Activated CD8-positive, alpha-beta T cell treated with anti-CD3 and anti-CD28 coated beads for 36 hours (primary cell): ENCODE measurements at regions of chr4 and their contacts with region 1.

Region 1: DNA sequence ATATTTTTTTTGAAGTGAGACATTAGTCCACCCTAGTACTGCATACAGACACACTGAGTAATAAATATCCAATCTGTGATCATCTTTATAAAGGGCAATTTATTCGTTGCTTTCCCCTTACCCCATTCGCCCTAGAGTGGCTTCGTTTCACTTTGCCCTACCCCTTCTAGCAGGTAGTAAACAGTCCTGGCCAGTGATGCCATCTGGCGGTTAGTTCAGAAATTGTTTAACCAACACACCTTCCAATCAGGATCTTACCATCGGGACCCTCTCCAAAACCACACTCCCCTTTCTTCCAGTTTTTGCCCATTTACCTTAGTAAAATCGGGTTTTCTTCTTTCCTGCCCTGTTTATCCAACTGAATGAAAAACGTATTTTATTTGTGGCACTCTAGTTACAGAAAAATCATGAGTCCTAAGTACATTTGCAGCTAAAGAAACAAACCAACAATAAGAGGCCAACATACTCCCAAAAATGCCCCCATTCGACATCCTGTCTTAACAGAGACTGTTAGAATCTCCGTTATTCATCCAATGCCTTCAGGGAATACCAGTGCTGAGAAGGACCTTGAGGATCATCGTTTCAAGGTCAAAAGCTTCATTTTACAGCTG is 2.2 kb downstream of the PPA2 start:
- DNase-seq: peak; percentile 82
- ATAC-seq: peak; percentile 32
- H3K4me3 Mint-ChIP-seq: peak overlapping the region; percentile 99
- H3K27ac Mint-ChIP-seq: peak overlapping the region; percentile 70
- H3K4me1 Mint-ChIP-seq: peaks cover 49% of the 10 kb centered on the region
- H3K27me3 Mint-ChIP-seq: peaks cover 1% of the 10 kb centered on the region
- CTCF ChIP-seq: peak; percentile 75

Region 2: GRCh38 chr4:104966349-104967033 is 505.2 kb before region 1 on chr4:
- CTCF ChIA-PET with region 1: interaction called, 12 read pairs
- POLR2A ChIA-PET with region 1: no interaction called
- intact Hi-C with region 1: no loop called
- DNase-seq: peak; percentile 72
- ATAC-seq: peak; percentile 98
- H3K4me3 Mint-ChIP-seq: peak overlapping the region; percentile 49
- H3K27ac Mint-ChIP-seq: peak overlapping the region; percentile 90
- H3K4me1 Mint-ChIP-seq: peaks cover 22% of the 10 kb centered on the region
- H3K27me3 Mint-ChIP-seq: no peaks in the 10 kb centered on the region
- CTCF ChIP-seq: no peak

Region 3: DNA sequence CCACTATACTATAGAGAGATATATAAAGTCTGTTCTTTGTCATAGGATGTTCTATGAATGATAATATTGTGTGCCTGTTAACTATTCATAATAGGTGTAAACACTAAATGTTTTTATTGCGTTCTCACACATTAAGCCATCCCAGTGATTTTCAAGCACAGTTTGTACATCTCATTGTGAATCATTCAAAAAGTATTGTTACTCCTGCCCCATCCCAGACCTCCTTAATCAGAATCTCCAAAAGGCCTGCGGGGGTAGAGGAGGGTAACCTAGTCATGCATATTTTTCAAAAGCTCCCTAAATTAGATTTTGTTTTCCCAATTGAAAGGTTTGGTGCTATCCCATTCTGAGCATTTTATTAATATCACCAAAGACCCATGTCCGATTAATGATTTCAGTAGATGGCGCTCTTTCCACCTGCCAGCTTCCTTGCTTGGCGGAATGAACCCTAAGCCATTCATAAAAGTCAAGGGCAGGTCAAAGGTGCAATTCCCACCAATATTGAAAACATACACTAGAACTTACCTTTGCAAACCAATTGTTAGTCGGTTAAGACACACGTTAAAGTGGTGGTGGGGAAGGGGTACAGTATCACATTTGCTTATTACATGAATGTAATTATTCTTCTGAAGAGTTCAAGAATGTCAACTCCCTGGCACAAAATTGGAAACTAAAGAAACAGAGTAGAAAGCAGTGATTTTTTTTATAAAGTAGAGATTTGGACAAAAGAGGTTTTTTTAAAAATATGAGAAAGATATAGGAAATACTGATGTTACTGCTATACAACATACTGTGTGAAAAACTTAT is 330.8 kb before region 1 on chr4:
- CTCF ChIA-PET with region 1: interaction called, 16 read pairs
- POLR2A ChIA-PET with region 1: interaction called, 9 read pairs
- intact Hi-C with region 1: loop called (anchors 1 kb)
- DNase-seq: peak; percentile 55
- ATAC-seq: no peak
- H3K4me3 Mint-ChIP-seq: no peak overlapping the region
- H3K27ac Mint-ChIP-seq: no peak overlapping the region
- H3K4me1 Mint-ChIP-seq: peaks cover 26% of the 10 kb centered on the region
- H3K27me3 Mint-ChIP-seq: peaks cover 5% of the 10 kb centered on the region
- CTCF ChIP-seq: peak; percentile 79

Region 4: GRCh38 chr4:105191621-105192210 is 280.0 kb before region 1 on chr4:
- CTCF ChIA-PET with region 1: interaction called, 10 read pairs
- POLR2A ChIA-PET with region 1: interaction called, 4 read pairs
- intact Hi-C with region 1: no loop called
- DNase-seq: no peak
- ATAC-seq: peak; percentile 71
- H3K4me3 Mint-ChIP-seq: peak overlapping the region; percentile 4
- H3K27ac Mint-ChIP-seq: peak overlapping the region; percentile 87
- H3K4me1 Mint-ChIP-seq: peaks cover 87% of the 10 kb centered on the region
- H3K27me3 Mint-ChIP-seq: no peaks in the 10 kb centered on the region
- CTCF ChIP-seq: no peak

Region 5: DNA sequence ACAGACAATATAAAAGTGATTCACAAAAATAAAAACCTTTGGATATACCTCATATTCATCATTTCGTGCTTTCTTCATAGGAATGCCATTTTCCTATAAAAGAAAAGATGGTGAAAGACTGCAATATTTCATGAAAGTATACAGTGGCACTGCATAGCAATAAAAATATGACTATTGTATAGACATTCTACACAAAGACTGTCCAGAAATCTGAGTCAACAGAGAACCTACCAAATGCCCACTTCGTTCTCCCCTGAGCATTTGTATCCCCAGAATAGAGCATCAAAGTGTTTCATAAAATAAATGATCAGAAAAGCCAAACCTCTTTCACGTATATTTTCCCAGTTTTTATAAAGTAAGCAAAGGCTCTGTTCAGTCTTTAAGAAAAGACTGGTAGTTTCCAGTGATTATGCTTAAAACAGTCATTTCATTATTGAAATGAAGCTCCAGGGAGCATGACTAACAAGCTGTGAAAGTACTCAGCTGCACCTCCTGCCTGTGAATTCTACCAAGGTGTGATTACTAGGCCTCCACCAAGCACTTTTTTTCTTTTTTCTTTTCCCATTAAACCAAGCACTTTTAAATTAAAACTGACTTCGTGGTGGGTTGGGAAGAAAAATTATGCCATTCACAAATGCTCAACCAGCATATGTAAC is 18.0 kb before region 1 on chr4:
- CTCF ChIA-PET with region 1: interaction called, 25 read pairs
- POLR2A ChIA-PET with region 1: interaction called, 7 read pairs
- intact Hi-C with region 1: no loop called
- DNase-seq: peak; percentile 63
- ATAC-seq: peak; percentile 96
- H3K4me3 Mint-ChIP-seq: no peak overlapping the region
- H3K27ac Mint-ChIP-seq: peak overlapping the region; percentile 54
- H3K4me1 Mint-ChIP-seq: peaks cover 34% of the 10 kb centered on the region
- H3K27me3 Mint-ChIP-seq: no peaks in the 10 kb centered on the region
- CTCF ChIP-seq: peak; percentile 19

Region 6: DNA sequence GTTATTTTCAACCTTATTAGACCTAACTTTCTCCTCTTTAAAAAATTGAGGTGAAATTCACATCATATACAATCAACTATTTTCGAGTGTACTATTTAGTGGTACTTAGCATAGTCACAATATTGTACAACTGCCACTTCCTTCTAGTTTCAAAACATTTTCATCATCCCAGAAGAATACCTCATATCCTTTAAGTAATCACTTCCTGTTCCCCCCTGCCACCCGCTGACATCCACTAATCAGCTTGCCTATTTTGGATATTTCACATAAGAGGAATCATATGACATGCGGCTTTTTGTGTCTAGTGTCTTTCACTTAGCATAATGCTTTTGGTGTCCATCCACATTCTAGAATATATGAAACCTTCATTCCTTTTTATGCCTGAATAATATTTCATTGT is 12.2 kb after region 1 on chr4:
- CTCF ChIA-PET with region 1: interaction called, 12 read pairs
- POLR2A ChIA-PET with region 1: no interaction called
- intact Hi-C with region 1: no loop called
- DNase-seq: no peak
- ATAC-seq: no peak
- H3K4me3 Mint-ChIP-seq: no peak overlapping the region
- H3K27ac Mint-ChIP-seq: no peak overlapping the region
- H3K4me1 Mint-ChIP-seq: no peaks in the 10 kb centered on the region
- H3K27me3 Mint-ChIP-seq: peaks cover 4% of the 10 kb centered on the region
- CTCF ChIP-seq: no peak